Heart right ventricle (tissue), 16 donors: ENCODE measurements at regions of chr3 and their contacts with region 1.

Region 1: GRCh38 chr3:49171119-49171774 is at the start of gene KLHDC8B:
- DNase-seq: peak; percentile 91
- ATAC-seq: peak; percentile 86 to 93 (median 91)
- H3K4me3 ChIP-seq: peak within 1 kb of the TSS; percentile 42 to 100 (median 84)
- H3K27ac ChIP-seq: peak within 1 kb of the TSS; percentile 81 to 100 (median 94)
- H3K4me1 ChIP-seq: peaks cover 22 to 63% (median 55%) of the 10 kb centered on the region in 9 donors
- H3K27me3 ChIP-seq: no peaks in the 10 kb centered on the region
- CTCF ChIP-seq: peak; percentile 90 to 98 (median 97)
- total RNA-seq, gene KLHDC8B: 87.9 to 190 (median 118) TPM

Region 2: GRCh38 chr3:49058011-49058410 is 113.2 kb before region 1 on chr3:
- intact Hi-C with region 1: no loop called
- DNase-seq: no peak
- ATAC-seq: peak in 2 of 8 donors; percentile 16 to 22
- H3K4me3 ChIP-seq: no peak overlapping the region
- H3K27ac ChIP-seq: no peak overlapping the region
- H3K4me1 ChIP-seq: no peaks in the 10 kb centered on the region
- H3K27me3 ChIP-seq: no peaks in the 10 kb centered on the region
- CTCF ChIP-seq: no peak

Region 3: GRCh38 chr3:49133226-49133951 is 37.9 kb before region 1 on chr3:
- intact Hi-C with region 1: loop called in 3 of 10 experiments (anchors 5 kb)
- DNase-seq: peak; percentile 88 to 93
- ATAC-seq: peak; percentile 79 to 93 (median 86)
- H3K4me3 ChIP-seq: peak overlapping the region; percentile 61 to 97 (median 78)
- H3K27ac ChIP-seq: peak overlapping the region; percentile 85 to 99 (median 94)
- H3K4me1 ChIP-seq: peaks cover 15 to 46% (median 35%) of the 10 kb centered on the region in 9 donors
- H3K27me3 ChIP-seq: no peaks in the 10 kb centered on the region
- CTCF ChIP-seq: peak in 1 of 9 donors; percentile 0

Region 4: GRCh38 chr3:49276475-49277382 is 105.5 kb after region 1 on chr3 and contains the start of gene C3orf62:
- intact Hi-C with region 1: loop called (anchors 2 to 10 kb)
- DNase-seq: peak; percentile 95 to 96
- ATAC-seq: peak; percentile 95 to 96 (median 96)
- H3K4me3 ChIP-seq: peak within 1 kb of the TSS; percentile 9 to 61 (median 56)
- H3K27ac ChIP-seq: peak within 1 kb of the TSS; percentile 91 to 99 (median 98)
- H3K4me1 ChIP-seq: peaks cover 16 to 46% (median 40%) of the 10 kb centered on the region in 9 donors
- H3K27me3 ChIP-seq: no peaks in the 10 kb centered on the region
- CTCF ChIP-seq: peak in 1 of 9 donors; percentile 8
- total RNA-seq, gene C3orf62: 2.3 to 4.1 (median 2.8) TPM

Region 5: GRCh38 chr3:49295489-49296058 is 124.3 kb after region 1 on chr3:
- intact Hi-C with region 1: loop called in 2 of 10 experiments (anchors 5 kb)
- DNase-seq: peak in 1 of 2 donors; percentile 14
- ATAC-seq: no peak
- H3K4me3 ChIP-seq: no peak overlapping the region
- H3K27ac ChIP-seq: peak overlapping the region in 7 of 10 donors; percentile 78 to 93 (median 84)
- H3K4me1 ChIP-seq: peaks cover 3 to 48% (median 25%) of the 10 kb centered on the region in 9 donors
- H3K27me3 ChIP-seq: no peaks in the 10 kb centered on the region
- CTCF ChIP-seq: peak in 8 of 9 donors; percentile 26 to 69 (median 56)

Region 6: DNA sequence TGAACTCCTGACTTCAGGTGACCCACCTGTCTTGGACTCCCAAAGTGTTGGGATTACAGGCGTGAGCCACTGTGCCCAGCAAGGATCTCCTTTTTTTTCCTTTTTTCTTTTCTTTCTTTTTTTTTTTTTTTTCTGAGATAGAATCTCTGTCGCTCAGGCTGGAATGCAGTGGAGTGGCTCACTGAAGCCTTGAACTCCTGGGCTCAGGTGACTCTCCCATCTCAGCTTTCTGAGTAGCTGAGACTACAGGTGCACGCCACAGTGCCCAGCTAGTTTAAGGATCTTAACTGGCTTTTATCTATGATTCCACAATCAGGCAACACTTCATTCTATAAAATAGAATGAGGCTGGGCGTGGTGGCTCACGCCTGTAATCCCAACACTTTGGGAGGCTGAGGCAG is 274.1 kb after region 1 on chr3:
- intact Hi-C with region 1: loop called in 7 of 10 experiments (anchors 1 to 10 kb)
- DNase-seq: no peak
- ATAC-seq: no peak
- H3K4me3 ChIP-seq: no peak overlapping the region
- H3K27ac ChIP-seq: peak overlapping the region in 1 of 10 donors; percentile 86
- H3K4me1 ChIP-seq: peaks cover 0 to 35% (median 14%) of the 10 kb centered on the region in 9 donors
- H3K27me3 ChIP-seq: no peaks in the 10 kb centered on the region
- CTCF ChIP-seq: no peak